ENCODE measurements at regions of chrX and their contacts with region 1.

Region 1: DNA sequence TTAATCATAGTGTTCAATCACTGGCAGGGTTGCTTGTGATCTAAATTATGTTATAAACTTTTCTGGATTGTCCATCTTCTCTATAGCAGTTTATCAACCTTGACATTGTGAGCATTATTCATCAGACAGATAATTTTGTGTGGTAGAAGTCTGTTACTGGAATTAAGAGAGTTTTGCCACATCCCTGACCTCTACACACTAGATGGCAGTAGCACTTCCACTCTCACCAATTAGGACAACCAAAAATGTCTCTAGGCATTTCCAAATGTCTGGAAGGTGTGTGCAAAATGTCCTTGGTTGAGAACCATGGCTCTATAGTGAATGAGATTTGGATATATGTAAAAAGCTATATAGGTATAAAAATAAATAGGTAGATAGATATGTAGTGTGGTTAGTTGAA is 324.1 kb upstream of the FAM47C start:
- DNase-seq: no peak
- H3K4me3 Mint-ChIP-seq: no peak overlapping the region
- H3K27ac Mint-ChIP-seq: no peak overlapping the region
- H3K4me1 Mint-ChIP-seq: no peaks in the 10 kb centered on the region
- H3K27me3 Mint-ChIP-seq: no peaks in the 10 kb centered on the region
- CTCF ChIP-seq: no peak

Region 2: GRCh38 chrX:36528661-36529060 is 155.4 kb before region 1 on chrX:
- CTCF ChIA-PET with region 1: no interaction called
- intact Hi-C with region 1: no loop called
- DNase-seq: no peak
- H3K4me3 Mint-ChIP-seq: no peak overlapping the region
- H3K27ac Mint-ChIP-seq: no peak overlapping the region
- H3K4me1 Mint-ChIP-seq: no peaks in the 10 kb centered on the region
- H3K27me3 Mint-ChIP-seq: no peaks in the 10 kb centered on the region
- CTCF ChIP-seq: no peak

Region 3: GRCh38 chrX:36867143-36867542 is 183.1 kb after region 1 on chrX:
- CTCF ChIA-PET with region 1: no interaction called
- intact Hi-C with region 1: loop called (anchors 10 kb)
- DNase-seq: peak; percentile 14
- H3K4me3 Mint-ChIP-seq: no peak overlapping the region
- H3K27ac Mint-ChIP-seq: no peak overlapping the region
- H3K4me1 Mint-ChIP-seq: peaks cover 8% of the 10 kb centered on the region
- H3K27me3 Mint-ChIP-seq: no peaks in the 10 kb centered on the region
- CTCF ChIP-seq: peak; percentile 40